ENCODE measurements at regions of chr3 and their contacts with region 1.

Region 1: DNA sequence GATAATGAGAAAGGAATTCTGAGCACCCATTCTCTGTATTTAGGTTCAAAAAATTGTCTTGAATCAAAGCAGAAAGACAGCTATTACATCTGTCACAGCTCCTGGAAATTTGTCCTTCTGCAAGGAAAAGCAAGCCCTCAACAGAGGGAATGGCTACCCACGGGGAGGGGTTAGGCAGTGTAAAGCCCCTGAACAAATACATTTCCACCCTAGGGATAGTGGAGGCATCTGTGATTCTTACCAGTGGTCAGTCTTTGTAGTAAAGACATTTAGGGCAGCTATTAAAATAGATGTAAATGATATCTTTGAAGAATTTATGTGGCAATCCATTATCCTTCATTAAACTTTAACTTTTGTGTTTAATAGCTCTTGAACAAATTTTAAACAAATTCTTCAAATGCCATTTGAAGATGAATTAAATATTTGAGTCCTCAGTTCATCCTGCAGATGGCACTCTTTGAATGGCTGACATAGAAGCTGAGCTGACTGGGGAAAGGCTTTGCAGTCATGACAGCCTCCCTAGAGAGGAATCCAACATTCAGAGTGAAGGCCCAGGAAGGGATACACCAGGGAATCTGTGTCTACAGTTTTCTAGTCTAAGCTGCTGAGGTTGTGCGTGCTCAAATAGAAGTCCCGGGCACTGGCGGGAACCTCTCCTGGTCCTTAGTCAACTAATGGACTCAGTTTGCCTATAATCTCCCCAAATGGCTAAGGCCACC is 359.7 kb upstream of the ROPN1 start:
- DNase-seq: peak; percentile 62
- H3K4me3 ChIP-seq: no peak overlapping the region
- H3K27ac ChIP-seq: peak overlapping the region in 1 of 2 experiments; percentile 67; a peak in 2 of 4 replicates
- H3K4me1 ChIP-seq: peaks cover 0 to 10% of the 10 kb centered on the region in 2 experiments; a peak in 2 of 4 replicates
- H3K27me3 ChIP-seq: no peaks in the 10 kb centered on the region
- CTCF ChIP-seq: peak; percentile 77
- EP300 ChIP-seq: no peak
- RAD21 ChIP-seq: peak; percentile 93

Region 2: DNA sequence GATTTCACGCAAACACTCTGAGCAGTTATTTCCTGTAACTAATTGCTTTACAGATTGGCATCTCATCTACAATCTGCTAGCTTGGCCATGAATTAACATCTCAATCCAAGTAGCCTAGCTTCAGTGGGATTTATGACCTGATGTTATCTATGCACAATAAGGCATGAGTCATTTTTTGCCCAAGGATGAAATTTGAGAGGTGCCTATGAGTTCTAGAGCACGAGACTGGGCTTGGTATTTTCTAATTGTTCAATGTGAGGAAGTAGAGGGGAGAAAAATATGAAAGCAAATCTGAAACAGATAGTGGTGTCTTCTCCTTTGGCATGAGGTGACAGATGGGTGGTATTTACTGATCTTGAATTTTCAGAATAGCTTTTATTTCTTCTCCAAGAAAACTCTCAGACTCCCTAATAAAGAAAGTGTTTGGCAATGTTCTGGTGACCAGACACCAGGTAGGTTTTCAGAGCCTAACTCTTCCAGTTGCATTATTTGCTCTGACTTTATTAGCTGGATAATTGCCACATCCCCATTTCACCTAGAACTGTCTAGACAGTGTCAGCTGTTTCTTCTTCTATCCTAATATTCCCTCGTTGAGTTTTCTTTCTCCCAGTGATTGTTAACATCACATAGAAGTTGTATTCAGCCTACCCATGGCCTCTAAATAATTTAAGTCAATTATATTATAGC is 77.7 kb after region 1 on chr3:
- CTCF ChIA-PET with region 1: interaction called, 35 read pairs
- POLR2A ChIA-PET with region 1: no interaction called
- DNase-seq: peak; percentile 29
- H3K4me3 ChIP-seq: no peak overlapping the region
- H3K27ac ChIP-seq: peak overlapping the region; percentile 75 to 88
- H3K4me1 ChIP-seq: peaks cover 5 to 22% of the 10 kb centered on the region in 2 experiments
- H3K27me3 ChIP-seq: no peaks in the 10 kb centered on the region
- CTCF ChIP-seq: no peak
- EP300 ChIP-seq: peak; percentile 82 to 95
- RAD21 ChIP-seq: no peak

Region 3: GRCh38 chr3:124456506-124456905 is 104.9 kb after region 1 on chr3:
- CTCF ChIA-PET with region 1: interaction called, 11 read pairs
- POLR2A ChIA-PET with region 1: no interaction called
- DNase-seq: no peak
- H3K4me3 ChIP-seq: no peak overlapping the region
- H3K27ac ChIP-seq: peak overlapping the region in 1 of 2 experiments; percentile 77; a peak in 2 of 4 replicates
- H3K4me1 ChIP-seq: peaks cover 0 to 5% of the 10 kb centered on the region in 2 experiments; a peak in 2 of 4 replicates
- H3K27me3 ChIP-seq: no peaks in the 10 kb centered on the region
- CTCF ChIP-seq: no peak
- EP300 ChIP-seq: no peak
- RAD21 ChIP-seq: no peak

Region 4: GRCh38 chr3:124552239-124552638 is 200.7 kb after region 1 on chr3:
- CTCF ChIA-PET with region 1: interaction called, 10 read pairs
- POLR2A ChIA-PET with region 1: no interaction called
- DNase-seq: no peak
- H3K4me3 ChIP-seq: no peak overlapping the region
- H3K27ac ChIP-seq: peak overlapping the region in 1 of 2 experiments; percentile 29; a peak in 1 of 4 replicates
- H3K4me1 ChIP-seq: peaks cover 4 to 27% of the 10 kb centered on the region in 2 experiments; a peak in 3 of 4 replicates
- H3K27me3 ChIP-seq: no peaks in the 10 kb centered on the region
- CTCF ChIP-seq: no peak
- EP300 ChIP-seq: no peak
- RAD21 ChIP-seq: no peak

Region 5: DNA sequence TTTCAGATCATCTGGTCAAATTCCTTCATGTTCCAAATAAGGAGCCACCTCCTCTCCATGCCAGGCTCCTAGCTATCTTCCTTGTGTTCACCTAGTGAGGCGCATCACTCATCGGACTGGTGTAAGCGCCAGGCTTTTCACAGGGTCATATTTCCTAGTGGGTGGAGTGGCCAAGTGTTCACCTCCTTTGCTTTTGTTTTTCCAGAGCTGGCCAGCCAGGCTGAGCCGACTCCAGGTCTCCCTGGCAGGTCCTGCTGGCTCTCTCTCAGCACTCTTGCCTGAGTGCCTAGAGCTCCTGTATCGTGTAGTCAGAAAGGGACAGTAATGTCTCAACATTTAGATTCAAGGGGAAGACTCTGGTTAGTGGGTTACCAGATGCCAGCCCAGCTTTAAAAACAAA is 673.2 kb after region 1 on chr3:
- CTCF ChIA-PET with region 1: no interaction called
- POLR2A ChIA-PET with region 1: no interaction called
- DNase-seq: no peak
- H3K4me3 ChIP-seq: 0 out of 4 replicates have a peak overlapping the region, but pooled peaks of 1 of the 2 experiments have one; percentile 7
- H3K27ac ChIP-seq: peak overlapping the region in 1 of 2 experiments; percentile 71; a peak in 1 of 4 replicates
- H3K4me1 ChIP-seq: peaks cover 0 to 22% of the 10 kb centered on the region in 2 experiments; a peak in 2 of 4 replicates
- H3K27me3 ChIP-seq: no peaks in the 10 kb centered on the region
- CTCF ChIP-seq: no peak
- EP300 ChIP-seq: no peak
- RAD21 ChIP-seq: no peak